AG04449 (cell line): ENCODE measurements at regions of chr2 and their contacts with region 1.

Region 1: GRCh38 chr2:197777823-197778407 is 7.2 kb downstream of the BOLL start:
- DNase-seq: no peak
- H3K4me3 ChIP-seq: no peak overlapping the region
- CTCF ChIP-seq: peak; percentile 35

Region 2: DNA sequence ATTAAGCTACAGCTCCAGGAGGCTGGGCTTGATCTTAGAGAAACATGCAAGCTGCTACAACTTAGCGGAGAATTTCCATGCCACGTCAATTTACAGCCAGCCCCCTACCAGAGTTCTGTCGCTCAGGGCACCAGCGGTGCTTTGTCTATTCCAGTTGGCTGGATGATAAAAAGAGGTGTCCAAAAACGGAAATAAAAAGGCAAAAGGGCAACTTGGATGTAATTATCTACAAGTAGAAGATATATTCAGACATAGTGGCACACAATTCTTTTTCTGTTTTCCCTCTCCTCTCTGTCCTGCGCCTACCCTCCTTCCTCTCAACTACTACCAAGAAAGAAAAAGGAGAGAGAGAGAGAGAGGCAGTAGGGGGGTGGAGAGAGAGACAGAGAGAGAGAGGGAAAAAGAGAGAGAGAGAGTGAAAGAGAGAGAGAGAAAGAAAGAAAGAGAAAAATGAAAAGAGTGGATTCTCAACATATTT is 102.2 kb before region 1 on chr2:
- CTCF ChIA-PET with region 1: no interaction called
- POLR2A ChIA-PET with region 1: no interaction called
- DNase-seq: peak; percentile 29
- H3K4me3 ChIP-seq: peak overlapping the region; percentile 59
- CTCF ChIP-seq: no peak

Region 3: GRCh38 chr2:197705121-197705911 is 72.6 kb before region 1 on chr2 and contains the start of gene MARS2:
- CTCF ChIA-PET with region 1: interaction called, 33 read pairs
- POLR2A ChIA-PET with region 1: no interaction called
- DNase-seq: peak; percentile 29
- H3K4me3 ChIP-seq: peak within 1 kb of the TSS; percentile 90
- CTCF ChIP-seq: no peak